Naive thymus-derived CD4-positive, alpha-beta T cell (primary cell): ENCODE measurements at regions of chr4 and their contacts with region 1.

Region 1: DNA sequence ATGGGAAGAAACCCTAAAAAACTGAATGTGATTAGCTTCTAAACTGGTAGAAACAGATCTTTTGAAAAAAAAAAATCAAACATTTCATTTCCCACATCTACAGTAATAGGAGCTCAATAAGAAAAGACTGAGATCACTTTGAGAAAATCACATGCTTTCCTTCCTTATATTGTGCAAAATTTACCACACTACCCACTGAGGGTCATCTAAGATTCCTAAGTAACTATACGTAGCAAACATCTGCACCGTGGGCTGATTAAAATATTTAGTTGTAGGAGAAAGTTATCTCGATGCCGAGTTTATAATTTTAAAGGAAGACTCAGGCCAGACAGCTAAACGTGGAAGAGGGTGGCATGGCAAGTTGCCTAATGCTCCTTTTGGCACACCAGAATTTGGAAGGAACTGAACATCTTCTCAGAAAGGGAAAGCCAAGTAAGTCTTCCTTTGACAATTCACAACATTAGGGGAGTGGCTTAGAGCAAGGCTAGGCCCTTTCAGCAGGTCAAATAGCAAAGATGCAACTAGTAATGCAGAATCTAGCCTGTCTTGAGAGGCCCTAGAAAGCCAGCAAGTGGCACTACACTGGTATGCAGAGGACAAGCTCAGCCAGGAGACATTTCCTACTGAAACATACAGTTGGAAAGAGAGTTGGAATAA is 128.0 kb downstream of the TMA16 start:
- DNase-seq: no peak
- ATAC-seq: no peak
- H3K4me3 ChIP-seq: no peak overlapping the region
- H3K4me3 Mint-ChIP-seq: peak overlapping the region in 1 of 10 donors; percentile 20
- H3K27ac ChIP-seq: no peak overlapping the region
- H3K27ac Mint-ChIP-seq: no peak overlapping the region
- H3K4me1 ChIP-seq: peaks cover 0 to 18% of the 10 kb centered on the region in 2 donors
- H3K4me1 Mint-ChIP-seq: peaks cover 0 to 53% (median 43%) of the 10 kb centered on the region in 7 donors
- H3K27me3 ChIP-seq: no peaks in the 10 kb centered on the region
- H3K27me3 Mint-ChIP-seq: peaks cover 0 to 6% (median 0%) of the 10 kb centered on the region in 5 donors

Region 2: DNA sequence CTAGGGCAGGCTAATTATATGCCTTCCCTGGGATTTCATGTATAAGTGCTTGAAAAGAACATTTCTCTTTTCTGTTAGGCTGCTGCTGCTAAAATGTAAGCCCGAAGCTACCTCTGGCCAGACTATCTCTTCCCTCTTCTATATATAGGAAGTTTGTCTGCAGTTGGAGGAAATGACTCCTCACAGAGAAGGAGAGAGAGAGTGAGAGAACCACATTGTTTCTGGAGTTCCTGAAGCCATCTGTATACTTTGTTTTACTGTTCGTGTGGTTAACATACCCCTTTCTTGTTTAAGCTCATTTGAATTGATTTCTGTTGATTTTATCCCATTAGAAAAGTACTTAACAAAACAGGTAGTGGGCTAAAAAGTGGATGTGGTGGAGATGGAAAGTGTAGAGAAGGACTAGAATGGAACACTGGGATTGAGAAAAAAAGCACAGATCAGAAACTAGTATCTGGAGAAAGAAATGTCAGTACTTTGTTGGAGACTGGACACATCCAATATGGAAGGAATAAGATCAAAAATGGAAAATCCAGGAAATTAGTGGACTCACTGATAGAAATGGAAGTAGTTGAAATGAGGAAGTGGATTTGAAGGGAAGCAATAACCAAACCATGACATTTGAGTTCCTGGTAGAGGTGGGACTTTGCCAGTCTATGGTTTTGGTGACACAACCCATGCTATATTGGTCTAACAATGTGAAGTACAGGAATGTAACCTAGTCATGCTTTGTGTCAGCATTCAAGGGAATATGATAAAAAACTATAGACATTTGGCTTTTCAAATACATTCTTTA is 15.4 kb before region 1 on chr4:
- CTCF ChIA-PET with region 1: no interaction called
- POLR2A ChIA-PET with region 1: no interaction called
- intact Hi-C with region 1: loop called in 1 of 2 experiments (anchors 2 kb)
- DNase-seq: no peak
- ATAC-seq: peak; percentile 61
- H3K4me3 ChIP-seq: no peak overlapping the region
- H3K4me3 Mint-ChIP-seq: no peak overlapping the region
- H3K27ac ChIP-seq: no peak overlapping the region
- H3K27ac Mint-ChIP-seq: no peak overlapping the region
- H3K4me1 ChIP-seq: no peaks in the 10 kb centered on the region
- H3K4me1 Mint-ChIP-seq: peaks cover 0 to 48% (median 26%) of the 10 kb centered on the region in 7 donors
- H3K27me3 ChIP-seq: no peaks in the 10 kb centered on the region
- H3K27me3 Mint-ChIP-seq: peaks cover 0 to 14% (median 3%) of the 10 kb centered on the region in 5 donors

Region 3: DNA sequence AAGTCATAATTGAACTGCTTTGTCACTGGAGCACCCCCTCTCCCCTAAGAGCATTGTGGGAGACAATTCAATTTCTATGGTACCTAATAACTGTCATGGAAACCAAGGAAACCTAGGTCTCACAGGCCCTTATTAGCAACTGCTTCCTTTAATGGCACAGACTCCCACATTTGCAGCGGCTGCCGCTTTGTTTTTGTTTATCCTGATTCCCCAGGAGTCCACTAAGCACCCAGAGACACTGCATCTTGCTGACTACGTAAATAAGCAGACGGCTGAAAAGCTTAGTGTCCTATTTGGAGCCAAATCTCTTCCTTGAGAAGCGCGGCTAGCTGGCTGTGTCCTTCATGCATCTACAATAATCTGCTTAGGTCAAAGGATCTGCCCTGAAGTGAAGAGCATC is 366.4 kb after region 1 on chr4:
- CTCF ChIA-PET with region 1: no interaction called
- POLR2A ChIA-PET with region 1: interaction called, 10 read pairs
- intact Hi-C with region 1: no loop called
- DNase-seq: no peak
- ATAC-seq: no peak
- H3K4me3 ChIP-seq: no peak overlapping the region
- H3K4me3 Mint-ChIP-seq: no peak overlapping the region
- H3K27ac ChIP-seq: no peak overlapping the region
- H3K27ac Mint-ChIP-seq: no peak overlapping the region
- H3K4me1 ChIP-seq: no peaks in the 10 kb centered on the region
- H3K4me1 Mint-ChIP-seq: no peaks in the 10 kb centered on the region
- H3K27me3 ChIP-seq: no peaks in the 10 kb centered on the region
- H3K27me3 Mint-ChIP-seq: peaks cover 0 to 7% (median 0%) of the 10 kb centered on the region in 5 donors